Cardiac septum (tissue), 1 donor: ENCODE measurements at regions of chr1 and their contacts with region 1.

Region 1: DNA sequence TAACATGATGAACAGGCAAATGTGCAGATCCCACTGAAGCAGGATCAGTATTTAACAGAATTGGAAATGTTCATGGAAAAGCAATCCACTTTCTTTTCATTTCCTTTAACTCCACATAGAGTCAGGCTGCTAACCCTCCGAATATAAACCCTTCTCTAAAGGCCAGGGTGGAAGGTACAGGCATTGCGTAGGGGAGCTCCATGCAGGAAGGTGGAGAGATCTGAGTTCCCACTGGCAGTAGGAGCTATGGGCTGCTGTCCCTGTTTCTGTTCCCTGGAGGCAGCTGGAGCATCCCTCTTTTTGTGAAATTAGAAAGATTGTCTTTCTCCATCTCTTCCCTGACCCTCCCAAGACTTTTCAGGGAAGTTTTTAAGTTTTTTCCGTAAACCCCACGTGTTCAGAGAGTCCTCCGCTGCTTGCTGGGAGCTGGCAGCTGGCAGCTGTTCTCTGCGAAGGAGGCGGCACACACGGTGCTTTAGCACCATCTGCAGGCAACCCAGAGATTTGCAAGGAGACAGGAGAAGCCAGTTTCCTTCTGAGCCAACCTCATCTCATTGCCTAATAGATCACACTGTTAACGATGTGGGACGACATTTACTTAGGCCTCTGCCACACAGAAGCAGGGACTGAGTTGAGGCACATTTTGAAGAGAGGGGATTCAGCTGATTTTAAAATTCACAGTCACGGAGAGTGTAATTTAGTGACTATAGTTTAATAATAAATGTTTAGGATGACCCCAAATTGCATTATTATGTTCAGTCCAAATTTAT is 55.4 kb upstream of the HOOK1 start:
- DNase-seq: peak; percentile 89

Region 2: GRCh38 chr1:58739856-58740466 is 1019.4 kb before region 1 on chr1:
- intact Hi-C with region 1: loop called (anchors 5 kb)
- DNase-seq: no peak

Region 3: GRCh38 chr1:59057211-59057694 is 702.1 kb before region 1 on chr1:
- intact Hi-C with region 1: loop called (anchors 5 kb)
- DNase-seq: no peak

Region 4: DNA sequence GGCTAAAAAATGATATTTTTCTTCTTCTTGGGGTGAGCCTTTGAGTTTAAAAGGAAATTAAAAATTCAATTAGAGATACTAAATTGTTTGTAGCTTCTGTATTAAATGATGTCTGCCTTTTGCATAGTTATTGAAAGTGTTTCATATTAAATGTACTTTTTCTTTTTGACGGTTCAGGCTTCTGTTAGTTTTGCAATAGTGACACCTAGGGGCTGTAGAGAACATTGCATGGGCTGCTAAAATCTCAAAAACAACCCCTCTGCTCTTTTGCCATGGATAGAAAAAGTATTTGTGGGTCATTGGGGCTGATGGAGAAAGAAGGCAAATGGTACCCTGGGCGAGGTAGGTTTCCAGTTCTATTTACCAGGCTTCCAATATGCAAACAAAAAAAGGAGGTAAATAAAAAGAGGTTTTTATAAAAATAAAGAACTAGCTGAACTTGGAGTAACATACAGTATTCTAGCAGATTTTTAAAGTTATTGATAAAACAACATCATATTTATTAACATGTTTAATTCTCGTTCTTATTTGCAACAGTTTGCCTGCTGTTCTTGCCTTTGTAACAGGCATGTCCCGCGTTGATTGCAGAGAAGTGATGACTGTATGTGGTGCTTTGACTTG is 60.0 kb before region 1 on chr1:
- intact Hi-C with region 1: loop called (anchors 2 kb)
- DNase-seq: no peak

Region 5: DNA sequence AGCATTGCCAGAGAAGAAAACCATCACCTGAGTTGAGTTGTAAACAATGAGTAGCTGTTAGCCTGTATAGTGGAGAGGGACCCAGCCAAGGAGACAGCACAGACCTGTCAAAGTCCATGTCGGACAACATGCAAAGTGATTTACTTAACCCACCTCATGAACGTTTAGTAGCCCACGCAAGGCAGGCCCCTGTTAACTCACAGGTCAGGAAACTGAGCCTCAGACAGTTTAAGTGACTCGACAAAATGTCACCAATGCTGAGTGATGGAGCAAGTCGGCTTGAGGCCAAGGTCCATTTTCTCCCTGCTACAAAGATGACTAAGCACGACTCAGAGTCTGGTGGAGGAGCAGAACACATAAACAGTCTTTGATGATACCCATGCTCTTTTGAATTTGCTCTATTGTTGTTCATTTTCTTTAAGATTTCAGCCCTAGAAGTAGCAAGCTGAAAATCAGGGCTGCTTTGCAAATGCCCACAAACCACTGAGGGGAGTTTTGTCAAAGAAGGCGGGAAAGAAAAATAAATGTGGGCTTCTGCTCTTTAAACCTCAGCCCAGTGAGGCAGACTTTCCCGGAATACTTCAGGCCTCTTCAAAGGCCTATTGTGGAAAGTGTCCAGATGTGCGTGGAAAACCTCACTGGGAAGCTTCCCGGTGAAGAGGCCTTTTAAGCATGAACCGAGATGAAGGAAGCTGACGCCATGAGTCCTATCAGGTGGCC is 28.4 kb before region 1 on chr1:
- intact Hi-C with region 1: no loop called
- DNase-seq: peak; percentile 87

Region 6: GRCh38 chr1:59743324-59744091 is 15.8 kb before region 1 on chr1:
- intact Hi-C with region 1: no loop called
- DNase-seq: no peak